Gastrocnemius medialis (tissue), 4 donors: ENCODE measurements at regions of chr17 and their contacts with region 1.

Region 1: GRCh38 chr17:2401426-2402221 is 764 bp upstream of the MNT start:
- DNase-seq: peak; percentile 100
- ATAC-seq: peak; percentile 44 to 50
- H3K4me3 ChIP-seq: peak overlapping the region; percentile 63 to 89 (median 85)
- H3K27ac ChIP-seq: peak overlapping the region; percentile 97 to 99 (median 99)
- H3K4me1 ChIP-seq: peaks cover 57% of the 10 kb centered on the region in 2 donors
- H3K27me3 ChIP-seq: no peaks in the 10 kb centered on the region
- CTCF ChIP-seq: no peak
- POLR2A ChIP-seq: no peak

Region 2: DNA sequence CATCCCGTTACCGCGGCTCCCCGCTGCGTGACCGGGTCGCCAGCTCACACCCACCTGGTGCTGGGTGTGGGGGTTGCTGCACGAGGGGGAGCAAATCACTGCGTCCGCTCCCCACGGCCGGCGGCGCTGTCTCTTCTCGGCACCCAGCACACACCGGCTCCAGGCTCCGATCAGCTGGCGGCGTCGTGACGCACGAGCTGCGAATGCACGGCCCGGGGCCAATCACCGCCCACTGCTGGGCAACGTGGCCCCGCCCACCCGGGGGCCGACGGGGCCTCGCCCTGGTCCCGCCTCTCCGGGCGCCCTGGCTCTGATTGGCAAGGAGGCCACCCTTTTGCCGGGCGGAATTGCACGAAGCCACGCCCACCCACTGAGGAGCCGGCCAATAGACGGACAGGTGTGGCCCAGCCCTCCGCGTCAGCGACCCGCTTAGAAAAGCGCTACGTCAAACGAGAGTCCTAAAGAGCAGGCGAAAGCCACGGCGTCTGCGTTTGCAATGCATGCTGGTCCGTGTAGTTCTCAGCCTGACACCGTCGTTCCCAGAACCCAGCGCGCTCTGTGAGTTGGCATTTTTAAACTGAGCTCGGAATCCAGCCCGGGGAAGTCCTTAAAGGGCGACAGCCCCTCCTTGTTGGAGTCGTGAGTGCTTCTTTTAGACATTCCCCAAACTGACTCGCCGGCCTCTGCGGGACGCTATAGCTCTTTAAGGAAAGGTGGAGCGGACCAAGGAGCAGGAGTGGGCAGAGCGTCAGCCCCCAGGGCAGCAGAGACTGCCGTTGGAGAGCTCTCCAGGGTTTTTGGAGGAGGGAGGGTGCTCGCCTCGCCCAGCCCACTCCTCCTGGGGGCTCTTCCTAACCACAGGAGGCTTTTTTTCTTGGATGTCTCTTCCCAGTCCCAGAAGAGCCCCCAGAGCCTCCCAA is 685.3 kb before region 1 on chr17:
- in situ Hi-C with region 1: no loop called
- intact Hi-C with region 1: loop called (anchors 2 kb)
- DNase-seq: peak; percentile 100
- ATAC-seq: peak; percentile 47 to 59
- H3K4me3 ChIP-seq: peak overlapping the region; percentile 91 to 95 (median 94)
- H3K27ac ChIP-seq: peak overlapping the region; percentile 99 to 100 (median 100)
- H3K4me1 ChIP-seq: peaks cover 52 to 55% of the 10 kb centered on the region in 2 donors
- H3K27me3 ChIP-seq: no peaks in the 10 kb centered on the region
- CTCF ChIP-seq: no peak
- POLR2A ChIP-seq: peak; percentile 99 to 100

Region 3: GRCh38 chr17:2054512-2055291 is 346.9 kb before region 1 on chr17 and contains the start of gene HIC1:
- in situ Hi-C with region 1: no loop called
- intact Hi-C with region 1: loop called (anchors 5 kb)
- DNase-seq: peak; percentile 52 to 63
- ATAC-seq: peak; percentile 53 to 63
- H3K4me3 ChIP-seq: peak within 1 kb of the TSS; percentile 52 to 67 (median 64)
- H3K27ac ChIP-seq: peak within 1 kb of the TSS; percentile 70 to 82 (median 76)
- H3K4me1 ChIP-seq: peaks cover 0 to 28% of the 10 kb centered on the region in 2 donors
- H3K27me3 ChIP-seq: peaks cover 0 to 14% (median 0%) of the 10 kb centered on the region in 3 donors
- CTCF ChIP-seq: peak; percentile 78 to 99 (median 98)
- POLR2A ChIP-seq: peak; percentile 55 to 71
- total RNA-seq, gene HIC1: 4.6 to 9.6 (median 6.9) TPM

Region 4: DNA sequence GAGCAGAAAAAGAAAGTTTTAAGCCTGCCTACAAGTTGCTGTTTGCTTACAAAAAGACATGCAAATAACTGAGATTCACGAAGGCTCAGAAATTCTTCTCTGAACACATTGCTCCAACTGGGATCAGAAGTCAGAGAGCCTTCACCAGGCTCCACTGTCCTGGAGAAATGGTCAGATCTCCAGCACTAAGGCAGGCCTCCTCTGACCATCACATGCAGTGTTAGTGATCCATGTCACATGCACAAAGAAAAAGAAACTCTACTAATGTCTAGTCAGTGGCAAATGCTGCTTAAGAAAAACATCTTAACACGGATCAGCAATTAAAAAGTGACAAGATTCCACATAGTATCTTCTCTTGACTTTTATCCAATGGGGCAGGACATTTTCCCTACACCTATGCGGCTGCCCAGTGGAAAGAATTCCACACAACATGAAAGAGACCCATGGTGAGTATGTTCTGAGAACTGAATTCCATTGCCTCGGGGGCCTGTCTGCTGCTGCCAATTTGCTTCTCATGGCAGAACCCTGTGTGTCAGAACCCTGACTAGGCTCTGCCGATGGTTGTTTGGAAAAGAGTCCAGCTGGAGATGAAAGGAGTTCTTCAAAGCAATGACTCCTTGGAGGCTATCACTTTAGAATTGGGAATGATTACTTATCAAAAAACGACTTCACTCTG is 250.1 kb before region 1 on chr17:
- in situ Hi-C with region 1: no loop called
- intact Hi-C with region 1: no loop called
- DNase-seq: no peak
- ATAC-seq: no peak
- H3K4me3 ChIP-seq: no peak overlapping the region
- H3K27ac ChIP-seq: no peak overlapping the region
- H3K4me1 ChIP-seq: no peaks in the 10 kb centered on the region
- H3K27me3 ChIP-seq: no peaks in the 10 kb centered on the region
- CTCF ChIP-seq: no peak
- POLR2A ChIP-seq: no peak

Region 5: GRCh38 chr17:2259769-2260536 is 141.7 kb before region 1 on chr17:
- in situ Hi-C with region 1: no loop called
- intact Hi-C with region 1: no loop called
- DNase-seq: no peak
- ATAC-seq: no peak
- H3K4me3 ChIP-seq: no peak overlapping the region
- H3K27ac ChIP-seq: no peak overlapping the region
- H3K4me1 ChIP-seq: peaks cover 10 to 22% of the 10 kb centered on the region in 2 donors
- H3K27me3 ChIP-seq: no peaks in the 10 kb centered on the region
- CTCF ChIP-seq: no peak
- POLR2A ChIP-seq: no peak

Region 6: GRCh38 chr17:2336215-2336851 is 65.3 kb before region 1 on chr17 and contains the start of gene TSR1:
- in situ Hi-C with region 1: no loop called
- intact Hi-C with region 1: loop called (anchors 5 kb)
- DNase-seq: peak; percentile 86 to 89
- ATAC-seq: peak; percentile 85 to 88
- H3K4me3 ChIP-seq: peak within 1 kb of the TSS; percentile 71 to 90 (median 82)
- H3K27ac ChIP-seq: peak within 1 kb of the TSS; percentile 87 to 94 (median 92)
- H3K4me1 ChIP-seq: peaks cover 14 to 27% of the 10 kb centered on the region in 2 donors
- H3K27me3 ChIP-seq: no peaks in the 10 kb centered on the region
- CTCF ChIP-seq: peak in 2 of 5 experiments; percentile 35
- POLR2A ChIP-seq: peak; percentile 91
- total RNA-seq, gene TSR1: 76.7 to 94.1 (median 84.7) TPM

Region 7: DNA sequence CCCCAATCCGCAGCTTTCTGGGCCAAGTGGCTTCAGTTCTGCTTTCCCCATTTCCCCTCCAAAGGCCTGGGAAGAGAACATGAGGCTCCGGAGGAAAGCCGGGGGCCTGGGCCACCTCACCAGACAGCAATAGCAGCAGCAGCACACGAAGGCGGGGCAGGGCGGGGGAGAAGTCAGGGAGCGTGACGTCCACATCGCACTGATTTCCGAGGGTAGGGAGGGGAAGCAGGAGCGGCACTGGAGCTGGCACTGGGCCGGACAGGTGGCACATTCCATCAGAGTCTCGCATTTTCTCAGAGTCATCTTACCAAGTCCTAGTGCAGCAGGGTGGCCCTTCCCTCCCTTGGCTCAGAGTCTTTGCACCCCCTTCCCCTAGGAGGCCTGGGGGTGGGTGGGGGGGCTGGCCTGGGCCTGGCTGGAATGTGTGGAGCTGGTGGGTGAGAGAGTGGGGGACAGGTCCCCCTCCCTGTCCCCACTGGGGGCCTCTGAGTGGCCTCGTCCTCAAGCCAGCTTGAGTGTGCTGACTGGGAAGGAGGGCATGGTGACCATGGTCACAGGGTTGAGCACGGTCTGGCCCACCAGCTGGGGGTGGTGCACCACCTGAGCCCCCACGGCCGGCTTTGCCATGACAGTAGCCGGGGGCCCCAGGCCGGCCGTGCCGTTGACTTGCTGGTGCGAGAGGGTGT is 15.1 kb before region 1 on chr17:
- in situ Hi-C with region 1: no loop called
- intact Hi-C with region 1: loop called (anchors 2 kb)
- DNase-seq: no peak
- ATAC-seq: no peak
- H3K4me3 ChIP-seq: no peak overlapping the region
- H3K27ac ChIP-seq: peak overlapping the region in 2 of 4 donors; percentile 91 to 93
- H3K4me1 ChIP-seq: peaks cover 54 to 75% of the 10 kb centered on the region in 2 donors
- H3K27me3 ChIP-seq: no peaks in the 10 kb centered on the region
- CTCF ChIP-seq: no peak
- POLR2A ChIP-seq: no peak

Region 8: GRCh38 chr17:2592971-2593820 is 191.6 kb after region 1 on chr17 and contains the start of gene PAFAH1B1:
- in situ Hi-C with region 1: no loop called
- intact Hi-C with region 1: loop called (anchors 10 kb)
- DNase-seq: peak; percentile 84 to 91
- ATAC-seq: peak; percentile 83 to 86
- H3K4me3 ChIP-seq: peak within 1 kb of the TSS; percentile 91 to 99 (median 97)
- H3K27ac ChIP-seq: peak within 1 kb of the TSS; percentile 97 to 100 (median 98)
- H3K4me1 ChIP-seq: peaks cover 26 to 36% of the 10 kb centered on the region in 2 donors
- H3K27me3 ChIP-seq: no peaks in the 10 kb centered on the region
- CTCF ChIP-seq: peak in 3 of 5 experiments; percentile 30 to 49 (median 46)
- POLR2A ChIP-seq: peak; percentile 95 to 96
- total RNA-seq, gene PAFAH1B1: 99.2 to 106 (median 105) TPM

Region 9: GRCh38 chr17:2634361-2634960 is 232.8 kb after region 1 on chr17:
- in situ Hi-C with region 1: no loop called
- intact Hi-C with region 1: no loop called
- DNase-seq: peak; percentile 83 to 90
- ATAC-seq: peak; percentile 90
- H3K4me3 ChIP-seq: no peak overlapping the region
- H3K27ac ChIP-seq: peak overlapping the region; percentile 79 to 93 (median 92)
- H3K4me1 ChIP-seq: peaks cover 61 to 76% of the 10 kb centered on the region in 2 donors
- H3K27me3 ChIP-seq: no peaks in the 10 kb centered on the region
- CTCF ChIP-seq: no peak
- POLR2A ChIP-seq: no peak

Region 10: GRCh38 chr17:4366327-4367063 is 1964.9 kb after region 1 on chr17 and contains the start of gene UBE2G1:
- in situ Hi-C with region 1: no loop called
- intact Hi-C with region 1: loop called (anchors 10 kb)
- DNase-seq: peak; percentile 95 to 97
- ATAC-seq: peak; percentile 61
- H3K4me3 ChIP-seq: peak within 1 kb of the TSS; percentile 79 to 100 (median 94)
- H3K27ac ChIP-seq: peak within 1 kb of the TSS; percentile 89 to 100 (median 98)
- H3K4me1 ChIP-seq: peaks cover 20 to 31% of the 10 kb centered on the region in 2 donors
- H3K27me3 ChIP-seq: no peaks in the 10 kb centered on the region
- CTCF ChIP-seq: peak in 3 of 5 experiments; percentile 33 to 51 (median 44)
- POLR2A ChIP-seq: peak; percentile 99
- total RNA-seq, gene UBE2G1: 152 to 217 (median 180) TPM